A673 (cell line): ENCODE measurements at regions of chr12 and their contacts with region 1.

Region 1: DNA sequence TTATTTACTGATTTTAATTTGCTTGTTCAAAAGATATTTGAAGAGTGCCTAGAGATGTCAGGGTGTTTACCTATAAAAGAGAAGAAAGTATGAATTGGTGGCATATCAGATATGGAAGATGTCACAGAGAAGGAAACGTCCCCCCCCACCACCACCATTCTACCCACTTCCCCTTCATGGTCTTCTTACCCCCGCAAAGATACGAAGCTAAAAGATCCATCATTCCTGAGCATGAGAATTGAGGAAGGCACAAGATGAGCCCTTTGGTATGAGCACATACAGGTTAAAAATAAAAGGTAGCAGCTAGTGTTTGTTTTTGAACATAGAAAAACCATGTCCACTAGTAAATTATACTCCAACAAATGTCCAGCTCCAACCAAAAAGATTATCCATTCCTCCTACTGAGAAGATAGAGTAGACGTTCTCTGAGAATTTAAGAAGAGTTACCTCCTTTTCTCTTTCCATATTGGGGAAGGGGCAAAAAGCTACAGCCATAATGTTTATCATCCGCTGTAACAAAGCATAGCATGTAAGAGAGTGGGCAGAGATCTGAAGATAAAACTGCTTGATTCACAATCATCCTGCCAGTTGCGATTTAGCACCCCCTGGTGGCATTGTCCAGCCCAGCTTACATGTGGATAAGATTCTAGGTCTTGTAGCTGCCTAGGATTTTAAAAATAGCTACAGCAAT is 29.1 kb downstream of the NFYB start:
- DNase-seq: peak; percentile 87
- H3K4me3 ChIP-seq: no peak overlapping the region
- H3K27ac ChIP-seq: no peak overlapping the region
- H3K4me1 ChIP-seq: peaks cover 11% of the 10 kb centered on the region
- H3K27me3 ChIP-seq: no peaks in the 10 kb centered on the region
- CTCF ChIP-seq: peak; percentile 94

Region 2: DNA sequence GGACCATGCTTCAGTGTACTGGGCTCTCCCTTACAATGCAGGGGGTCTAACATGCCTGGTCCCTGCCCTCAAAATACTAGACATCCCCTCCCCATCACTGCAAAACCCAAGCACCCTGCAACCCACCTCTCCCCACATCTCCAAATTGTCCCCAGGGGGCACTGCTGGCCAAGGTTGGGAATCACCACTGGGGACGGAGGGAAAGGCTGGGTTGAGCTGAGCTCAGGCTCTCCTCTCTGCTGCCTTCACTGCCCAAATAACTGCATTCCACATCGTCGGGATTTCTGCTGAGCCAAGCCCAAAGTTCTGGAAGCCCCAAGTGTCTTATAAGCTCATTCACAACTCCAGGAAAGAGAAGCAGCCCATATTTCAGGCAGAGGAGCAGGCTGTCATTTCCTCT is 337.4 kb before region 1 on chr12:
- CTCF ChIA-PET with region 1: no interaction called
- POLR2A ChIA-PET with region 1: no interaction called
- intact Hi-C with region 1: loop called (anchors 10 kb)
- DNase-seq: peak; percentile 47
- H3K4me3 ChIP-seq: no peak overlapping the region
- H3K27ac ChIP-seq: no peak overlapping the region
- H3K4me1 ChIP-seq: peaks cover 8% of the 10 kb centered on the region
- H3K27me3 ChIP-seq: no peaks in the 10 kb centered on the region
- CTCF ChIP-seq: peak; percentile 56

Region 3: GRCh38 chr12:103877934-103878510 is 230.9 kb before region 1 on chr12:
- CTCF ChIA-PET with region 1: no interaction called
- POLR2A ChIA-PET with region 1: no interaction called
- intact Hi-C with region 1: loop called (anchors 2 kb)
- DNase-seq: peak; percentile 84
- H3K4me3 ChIP-seq: no peak overlapping the region
- H3K27ac ChIP-seq: no peak overlapping the region
- H3K4me1 ChIP-seq: no peaks in the 10 kb centered on the region
- H3K27me3 ChIP-seq: no peaks in the 10 kb centered on the region
- CTCF ChIP-seq: peak; percentile 84

Region 4: DNA sequence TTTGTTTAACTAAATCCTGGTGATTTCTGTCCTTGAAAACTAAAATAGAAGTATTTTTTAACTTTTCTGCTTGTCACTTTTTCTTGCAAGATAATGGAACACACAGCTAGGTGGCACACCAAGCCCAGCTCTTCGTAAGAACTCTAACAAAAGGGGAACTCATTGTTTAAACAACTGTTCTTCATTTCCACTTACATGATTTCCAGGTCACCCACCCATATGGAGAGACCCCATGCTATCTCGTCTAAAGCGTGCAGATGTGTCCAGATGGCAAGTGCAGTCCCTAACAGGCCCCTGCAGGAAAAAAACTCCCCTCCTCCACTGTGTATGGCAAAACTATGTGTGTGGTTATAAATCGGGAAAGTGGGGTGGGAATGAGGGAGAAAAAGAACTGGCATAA is 224.6 kb before region 1 on chr12:
- CTCF ChIA-PET with region 1: interaction called, 8 read pairs
- POLR2A ChIA-PET with region 1: no interaction called
- intact Hi-C with region 1: loop called (anchors 1 kb)
- DNase-seq: peak; percentile 42
- H3K4me3 ChIP-seq: no peak overlapping the region
- H3K27ac ChIP-seq: no peak overlapping the region
- H3K4me1 ChIP-seq: no peaks in the 10 kb centered on the region
- H3K27me3 ChIP-seq: no peaks in the 10 kb centered on the region
- CTCF ChIP-seq: peak; percentile 54

Region 5: DNA sequence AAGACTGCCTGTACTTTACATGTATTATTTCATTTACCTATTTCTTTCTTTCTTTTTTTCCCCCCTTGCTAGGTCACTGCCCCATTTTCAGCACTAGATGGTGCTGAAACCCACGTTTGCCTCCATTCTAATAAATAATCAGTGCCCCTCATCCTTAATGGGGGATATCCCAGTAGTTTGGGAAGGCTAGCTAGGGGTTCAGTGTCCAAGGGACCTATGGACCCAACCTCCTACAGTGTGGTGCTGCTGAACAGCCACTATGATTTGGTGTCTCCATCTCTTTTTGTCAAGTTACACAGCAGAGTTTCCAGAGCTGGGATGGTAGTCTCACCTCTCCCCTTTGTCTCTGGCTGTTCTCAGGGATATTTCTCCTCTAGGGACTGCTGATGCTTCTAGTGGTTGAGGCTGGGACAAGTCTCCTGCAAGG is 51.1 kb before region 1 on chr12:
- CTCF ChIA-PET with region 1: interaction called, 12 read pairs
- POLR2A ChIA-PET with region 1: no interaction called
- intact Hi-C with region 1: loop called (anchors 1 kb)
- DNase-seq: peak; percentile 50
- H3K4me3 ChIP-seq: no peak overlapping the region
- H3K27ac ChIP-seq: no peak overlapping the region
- H3K4me1 ChIP-seq: no peaks in the 10 kb centered on the region
- H3K27me3 ChIP-seq: no peaks in the 10 kb centered on the region
- CTCF ChIP-seq: peak; percentile 80

Region 6: GRCh38 chr12:104121001-104121400 is 12.1 kb after region 1 on chr12:
- CTCF ChIA-PET with region 1: no interaction called
- POLR2A ChIA-PET with region 1: no interaction called
- intact Hi-C with region 1: no loop called
- DNase-seq: no peak
- H3K4me3 ChIP-seq: no peak overlapping the region
- H3K27ac ChIP-seq: no peak overlapping the region
- H3K4me1 ChIP-seq: no peaks in the 10 kb centered on the region
- H3K27me3 ChIP-seq: no peaks in the 10 kb centered on the region
- CTCF ChIP-seq: no peak